ENCODE measurements at regions of chr15 and their contacts with region 1.

Region 1: DNA sequence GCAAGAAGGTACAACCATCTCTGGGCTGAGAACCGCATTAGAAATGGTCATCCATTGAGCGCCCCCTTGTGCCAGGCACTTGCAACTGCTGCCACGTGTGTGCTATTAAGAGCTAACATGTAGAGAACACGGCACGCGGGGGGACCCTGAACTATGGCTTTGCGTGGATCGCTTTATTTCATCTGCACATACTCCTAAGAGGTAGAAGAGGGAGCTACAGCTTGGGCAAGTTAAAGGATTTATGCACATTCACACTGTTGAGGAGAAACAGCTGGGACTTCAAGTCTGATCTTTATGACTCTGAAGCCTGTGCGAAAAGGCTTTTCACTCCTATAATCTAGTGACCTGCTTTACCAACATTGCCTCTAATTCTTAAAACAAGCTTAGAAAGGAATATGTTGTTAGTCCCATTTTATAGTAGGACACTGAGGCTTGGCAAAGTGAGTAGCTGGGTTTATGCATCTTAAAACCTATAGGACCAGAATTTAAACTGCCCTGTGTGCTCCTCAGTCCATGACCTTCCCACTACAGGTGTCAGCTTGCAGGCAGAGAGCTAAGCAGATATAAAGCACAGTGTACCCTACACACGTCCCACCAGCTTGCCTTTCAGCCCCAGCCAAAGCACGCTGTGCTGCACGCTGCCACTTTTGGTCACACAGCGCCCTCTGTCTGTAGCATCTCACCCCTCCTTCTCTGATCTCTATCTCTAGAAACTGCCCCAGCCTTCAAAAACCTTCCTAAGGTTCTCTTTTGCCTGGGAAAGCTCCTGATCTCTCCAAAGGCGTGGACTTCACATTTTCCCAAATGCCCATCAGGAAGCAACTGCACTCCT is 57.8 kb downstream of the STARD5 start:
- DNase-seq: peak; percentile 71 to 88 (median 83)
- H3K4me3 ChIP-seq: peak overlapping the region in 27 of 59 donors; percentile 0 to 46 (median 22)
- H3K27ac ChIP-seq: no peak overlapping the region
- H3K27me3 ChIP-seq: peaks cover 0 to 5% (median 0%) of the 10 kb centered on the region in 45 donors
- CTCF ChIP-seq: peak; percentile 63 to 92 (median 80)

Region 2: GRCh38 chr15:80977627-80978036 is 288.5 kb before region 1 on chr15:
- intact Hi-C with region 1: loop called in 1 of 2 experiments (anchors 1 kb)
- DNase-seq: peak; percentile 60 to 78 (median 66)
- H3K4me3 ChIP-seq: no peak overlapping the region
- H3K27ac ChIP-seq: peak overlapping the region in 1 of 59 donors; percentile 10
- H3K27me3 ChIP-seq: no peaks in the 10 kb centered on the region
- CTCF ChIP-seq: peak in 55 of 56 donors; percentile 37 to 88 (median 67)

Region 3: DNA sequence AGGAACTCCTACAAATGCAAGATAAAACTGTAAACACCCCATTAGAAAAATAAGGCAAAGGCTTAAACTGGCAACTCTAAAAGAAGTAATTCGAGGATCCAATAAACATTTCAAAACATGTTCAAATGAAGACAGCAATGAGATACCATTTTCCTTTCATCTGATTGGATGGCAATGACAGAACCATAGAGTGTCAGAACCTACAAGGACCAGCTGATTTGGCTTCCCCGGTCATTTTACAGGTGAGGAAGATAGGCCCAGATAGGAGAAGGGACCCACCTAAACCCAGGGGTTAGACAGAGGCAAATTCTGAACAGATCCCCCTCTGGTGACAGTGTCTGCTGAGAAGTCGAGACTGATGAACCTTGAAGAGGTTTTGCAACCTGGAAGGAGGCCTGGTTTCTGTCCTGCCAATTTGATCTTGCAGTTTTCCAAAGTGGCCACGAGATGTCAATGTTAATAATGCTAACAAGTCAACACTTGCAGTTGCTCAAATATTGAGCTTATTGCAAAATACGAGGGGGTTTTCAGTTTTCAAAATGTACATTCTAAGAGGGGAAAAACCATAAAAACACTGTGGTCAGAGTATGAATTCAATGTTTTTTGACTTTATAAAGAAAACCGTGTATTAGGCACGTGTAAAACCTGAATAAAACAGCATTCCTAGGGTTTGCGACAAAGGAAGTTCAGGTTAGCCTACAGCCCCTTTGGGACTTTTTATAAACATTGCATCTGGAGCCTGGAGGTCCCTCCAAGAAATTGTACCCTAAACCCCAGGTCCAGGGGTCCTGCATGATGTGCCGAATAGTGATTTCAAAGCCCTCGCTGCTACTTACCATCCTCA is 110.6 kb before region 1 on chr15:
- intact Hi-C with region 1: loop called (anchors 1 to 5 kb)
- DNase-seq: peak in 1 of 10 donors; percentile 64
- H3K4me3 ChIP-seq: no peak overlapping the region
- H3K27ac ChIP-seq: no peak overlapping the region
- H3K27me3 ChIP-seq: peaks cover 0 to 5% (median 0%) of the 10 kb centered on the region in 45 donors
- CTCF ChIP-seq: peak in 55 of 56 donors; percentile 44 to 86 (median 67)

Region 4: GRCh38 chr15:81346611-81347010 is 80.5 kb after region 1 on chr15:
- intact Hi-C with region 1: no loop called
- DNase-seq: no peak
- H3K4me3 ChIP-seq: no peak overlapping the region
- H3K27ac ChIP-seq: no peak overlapping the region
- H3K27me3 ChIP-seq: peaks cover 0 to 3% (median 0%) of the 10 kb centered on the region in 45 donors
- CTCF ChIP-seq: no peak

Region 5: GRCh38 chr15:81357223-81357622 is 91.1 kb after region 1 on chr15:
- intact Hi-C with region 1: no loop called
- DNase-seq: no peak
- H3K4me3 ChIP-seq: no peak overlapping the region
- H3K27ac ChIP-seq: no peak overlapping the region
- H3K27me3 ChIP-seq: no peaks in the 10 kb centered on the region
- CTCF ChIP-seq: no peak

Measured in dorsolateral prefrontal cortex (tissue), 120 donors.